Activated naive CD4-positive, alpha-beta T cell treated with anti-CD3 and anti-CD28 coated beads for 36 hours (primary cell): ENCODE measurements at regions of chr4 and their contacts with region 1.

Region 1: DNA sequence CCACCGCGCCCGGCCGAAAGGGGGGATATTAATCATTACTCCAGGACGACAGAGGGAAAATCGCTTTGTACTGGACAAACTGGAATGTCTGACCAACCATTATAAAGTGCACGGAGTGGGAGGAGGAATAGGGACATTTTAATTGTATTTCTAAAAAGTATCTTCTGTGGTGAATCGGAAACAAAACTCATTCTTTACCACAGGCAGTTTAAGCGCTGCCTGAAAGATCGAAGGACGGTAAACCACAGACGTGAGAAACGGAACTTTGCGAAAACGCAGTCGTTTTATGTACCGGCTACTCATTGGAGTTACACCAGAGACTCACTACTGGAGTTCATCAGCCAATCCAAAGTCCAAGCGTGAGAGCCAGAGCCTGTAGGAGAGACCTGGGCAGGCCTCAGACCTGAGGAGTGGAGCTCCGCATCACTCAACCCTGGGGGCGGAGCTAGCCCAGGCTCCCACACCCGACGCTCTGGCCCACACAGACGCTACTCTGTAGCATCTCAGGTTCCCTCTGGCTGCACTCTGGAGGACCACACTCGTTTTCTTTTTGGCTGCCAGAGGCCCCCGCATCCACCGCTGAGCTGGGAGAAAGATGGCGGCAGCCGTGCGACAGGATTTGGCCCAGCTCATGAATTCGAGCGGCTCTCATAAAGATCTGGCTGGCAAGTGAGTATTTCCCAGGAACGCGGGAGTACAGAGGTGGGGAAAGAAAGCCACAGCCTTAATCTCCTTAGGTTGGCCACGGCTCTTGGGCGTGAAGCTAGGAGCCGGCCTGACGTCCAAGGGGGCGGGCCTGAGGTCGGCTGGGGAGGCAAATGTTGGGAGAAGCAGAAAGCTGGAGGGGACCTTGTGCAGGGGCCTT is at the start of gene COPS4:
- DNase-seq: peak; percentile 98
- H3K4me3 Mint-ChIP-seq: peak within 1 kb of the TSS; percentile 95
- H3K27ac Mint-ChIP-seq: peak within 1 kb of the TSS; percentile 98
- H3K4me1 Mint-ChIP-seq: peaks cover 36% of the 10 kb centered on the region
- H3K27me3 Mint-ChIP-seq: no peaks in the 10 kb centered on the region
- total RNA-seq, gene COPS4: 37.1 to 38.6 TPM

Region 2: GRCh38 chr4:82373816-82374625 is 660.8 kb before region 1 on chr4 and contains the start of gene HNRNPD:
- CTCF ChIA-PET with region 1: no interaction called
- intact Hi-C with region 1: loop called (anchors 1 kb)
- DNase-seq: peak; percentile 96
- H3K4me3 Mint-ChIP-seq: peak within 1 kb of the TSS; percentile 95
- H3K27ac Mint-ChIP-seq: peak within 1 kb of the TSS; percentile 95
- H3K4me1 Mint-ChIP-seq: peaks cover 33% of the 10 kb centered on the region
- H3K27me3 Mint-ChIP-seq: no peaks in the 10 kb centered on the region
- total RNA-seq, gene HNRNPD: 340 to 367 TPM

Region 3: GRCh38 chr4:82462415-82462831 is 572.4 kb before region 1 on chr4:
- CTCF ChIA-PET with region 1: no interaction called
- intact Hi-C with region 1: loop called (anchors 1 kb)
- DNase-seq: peak; percentile 93
- H3K4me3 Mint-ChIP-seq: no peak overlapping the region
- H3K27ac Mint-ChIP-seq: no peak overlapping the region
- H3K4me1 Mint-ChIP-seq: peaks cover 2% of the 10 kb centered on the region
- H3K27me3 Mint-ChIP-seq: no peaks in the 10 kb centered on the region

Region 4: GRCh38 chr4:82890901-82891706 is 143.8 kb before region 1 on chr4 and contains the start of gene SEC31A:
- CTCF ChIA-PET with region 1: interaction called, 4 read pairs
- intact Hi-C with region 1: loop called (anchors 1 kb)
- DNase-seq: peak; percentile 98
- H3K4me3 Mint-ChIP-seq: peak within 1 kb of the TSS; percentile 81
- H3K27ac Mint-ChIP-seq: peak within 1 kb of the TSS; percentile 89
- H3K4me1 Mint-ChIP-seq: peaks cover 49% of the 10 kb centered on the region
- H3K27me3 Mint-ChIP-seq: no peaks in the 10 kb centered on the region
- total RNA-seq, gene SEC31A: 85.1 to 85.7 TPM

Region 5: GRCh38 chr4:83231620-83232076 is 196.8 kb after region 1 on chr4:
- CTCF ChIA-PET with region 1: no interaction called
- intact Hi-C with region 1: loop called (anchors 1 kb)
- DNase-seq: peak; percentile 68
- H3K4me3 Mint-ChIP-seq: no peak overlapping the region
- H3K27ac Mint-ChIP-seq: peak overlapping the region; percentile 16
- H3K4me1 Mint-ChIP-seq: peaks cover 46% of the 10 kb centered on the region
- H3K27me3 Mint-ChIP-seq: peaks cover 3% of the 10 kb centered on the region

Region 6: DNA sequence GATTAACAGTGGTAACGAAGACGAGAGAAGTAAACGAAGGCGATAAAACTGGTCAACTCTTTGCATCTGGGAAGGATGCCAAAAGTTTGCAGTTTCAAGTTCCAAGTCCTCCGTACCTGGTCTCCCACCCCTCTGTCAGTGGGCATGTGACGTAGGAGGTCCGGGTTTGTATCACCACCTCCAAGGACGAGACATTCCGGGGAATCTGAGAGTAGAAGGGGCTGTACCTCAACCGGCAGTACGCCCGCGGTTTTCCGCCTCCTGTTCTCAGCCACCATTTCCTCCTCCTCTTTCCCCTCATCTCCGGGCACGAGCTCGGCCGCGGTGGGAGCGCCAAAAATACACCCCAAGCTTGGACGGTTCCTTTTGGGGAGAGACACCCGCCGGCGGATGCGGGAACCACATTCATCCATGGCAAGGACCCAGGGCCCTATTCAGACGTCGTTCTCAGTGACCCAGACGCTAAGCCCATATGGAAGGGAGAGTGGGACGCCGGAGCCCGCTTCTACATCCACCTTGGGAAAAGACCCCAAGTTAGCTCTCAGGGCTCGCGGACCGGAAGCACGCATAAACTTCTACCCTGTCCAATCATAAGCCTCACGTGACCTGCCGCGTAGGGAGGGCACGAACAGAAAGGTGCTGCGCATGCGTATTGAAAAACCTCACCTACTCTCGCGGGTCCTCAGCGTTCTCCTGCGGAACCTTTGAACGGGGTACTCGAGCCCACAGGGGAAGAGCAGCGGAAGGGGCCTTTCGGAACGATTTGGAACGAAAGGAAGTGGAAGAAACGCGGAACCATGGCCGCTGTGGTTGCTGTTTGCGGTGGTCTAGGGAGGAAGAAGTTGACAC is 420.6 kb after region 1 on chr4 and contains the starts of genes HELQ and MRPS18C:
- CTCF ChIA-PET with region 1: no interaction called
- intact Hi-C with region 1: loop called (anchors 1 kb)
- DNase-seq: peak; percentile 98
- H3K4me3 Mint-ChIP-seq: peak within 1 kb of the TSS; percentile 100
- H3K27ac Mint-ChIP-seq: peak within 1 kb of the TSS; percentile 100
- H3K4me1 Mint-ChIP-seq: peaks cover 44% of the 10 kb centered on the region
- H3K27me3 Mint-ChIP-seq: no peaks in the 10 kb centered on the region
- total RNA-seq, gene HELQ: 7.9 to 10.9 TPM
- total RNA-seq, gene MRPS18C: 67.2 to 69.9 TPM